Activated CD4-positive, alpha-beta T cell treated with anti-CD3 and anti-CD28 coated beads, Interleukin-2, amount 10 ng/mL, durations not matched to agents 24 days and 14 days (primary cell): ENCODE measurements at regions of chr14 and their contacts with region 1.

Region 1: GRCh38 chr14:70027785-70028428 is 148.7 kb downstream of the SMOC1 start:
- DNase-seq: peak; percentile 91
- H3K4me3 Mint-ChIP-seq: no peak overlapping the region
- H3K27ac Mint-ChIP-seq: no peak overlapping the region
- H3K4me1 Mint-ChIP-seq: no peaks in the 10 kb centered on the region
- H3K27me3 Mint-ChIP-seq: no peaks in the 10 kb centered on the region

Region 2: DNA sequence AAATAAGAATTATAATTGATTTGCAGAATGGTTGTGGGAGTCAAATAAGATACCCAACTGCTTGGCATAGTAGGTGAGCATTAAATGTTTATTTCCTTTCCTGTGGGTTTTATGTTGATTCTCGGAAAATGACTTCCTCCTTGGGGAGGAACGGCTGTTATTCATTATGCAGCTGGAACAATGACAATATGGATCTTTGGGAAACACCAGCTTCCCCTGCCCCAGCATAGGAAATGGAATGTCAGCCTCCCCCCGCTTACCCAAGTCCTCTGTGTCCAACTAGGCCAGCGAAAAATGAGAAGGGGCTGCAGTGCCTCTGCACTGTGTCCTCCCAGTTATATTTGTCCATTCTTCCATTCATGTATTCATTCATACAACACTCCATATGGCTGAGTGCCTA is 441.5 kb before region 1 on chr14:
- intact Hi-C with region 1: loop called (anchors 5 kb)
- DNase-seq: no peak
- H3K4me3 Mint-ChIP-seq: no peak overlapping the region
- H3K27ac Mint-ChIP-seq: no peak overlapping the region
- H3K4me1 Mint-ChIP-seq: peaks cover 8% of the 10 kb centered on the region
- H3K27me3 Mint-ChIP-seq: peaks cover 7% of the 10 kb centered on the region

Region 3: DNA sequence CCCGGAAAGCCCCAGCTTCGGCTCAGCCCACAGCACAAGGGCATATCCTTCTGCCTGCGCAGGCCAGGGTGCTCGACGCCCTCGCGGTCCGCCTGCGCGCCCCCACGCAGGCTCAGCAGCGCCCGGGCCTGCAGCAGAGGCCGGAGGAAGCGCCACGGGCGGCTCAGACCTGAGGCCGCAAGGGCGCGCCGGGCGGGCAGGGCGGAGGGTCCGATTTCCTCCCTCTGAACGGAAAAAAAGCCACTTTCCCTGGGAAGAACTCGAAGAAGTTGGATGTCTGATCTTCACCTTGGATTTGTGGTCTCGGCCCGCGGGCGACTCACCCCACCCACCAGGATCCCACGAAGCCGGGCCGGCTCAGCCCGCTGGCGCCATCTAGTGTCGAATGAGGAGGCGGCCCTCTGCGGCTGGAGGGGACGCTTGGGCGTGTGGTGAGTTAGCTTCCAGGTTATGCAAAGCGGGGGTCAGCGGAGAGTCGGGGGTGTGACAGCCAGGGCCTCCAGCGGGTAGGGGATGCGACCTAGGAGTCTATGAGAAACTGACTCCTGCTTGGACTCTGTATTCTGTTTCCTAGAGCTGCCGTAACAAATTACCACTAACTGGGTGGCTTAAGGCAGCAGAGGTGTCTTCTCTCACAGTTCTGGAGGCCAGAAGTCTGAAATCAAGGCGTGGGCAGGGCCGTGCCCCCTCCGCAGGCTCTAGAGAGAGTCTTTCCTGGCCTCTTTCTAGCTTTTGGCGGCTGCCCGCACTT is 301.0 kb before region 1 on chr14:
- intact Hi-C with region 1: loop called (anchors 2 kb)
- DNase-seq: peak; percentile 96
- H3K4me3 Mint-ChIP-seq: peak overlapping the region; percentile 79
- H3K27ac Mint-ChIP-seq: peak overlapping the region; percentile 79
- H3K4me1 Mint-ChIP-seq: peaks cover 33% of the 10 kb centered on the region
- H3K27me3 Mint-ChIP-seq: peaks cover 7% of the 10 kb centered on the region

Region 4: DNA sequence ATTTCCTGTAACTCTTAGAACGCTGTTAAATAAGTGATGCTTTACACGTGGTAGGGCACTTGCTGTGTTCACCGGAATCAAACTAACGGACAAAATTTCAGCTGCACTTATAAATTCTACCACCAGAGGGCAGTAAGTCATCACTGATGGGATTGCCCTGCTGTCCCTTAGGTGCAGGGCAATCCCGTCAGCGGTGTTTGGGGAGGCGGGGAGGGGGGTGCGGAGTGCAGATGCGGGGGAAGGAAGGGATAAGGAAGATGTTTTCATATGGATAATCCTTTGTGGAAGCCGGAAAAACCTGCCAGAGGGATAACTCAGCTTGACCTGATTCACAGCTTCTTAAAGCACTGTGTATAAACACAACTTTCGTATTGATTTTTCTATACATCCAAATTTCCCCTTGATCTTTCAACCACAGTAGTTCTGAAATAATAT is 209.1 kb before region 1 on chr14:
- intact Hi-C with region 1: loop called (anchors 1 kb)
- DNase-seq: peak; percentile 92
- H3K4me3 Mint-ChIP-seq: no peak overlapping the region
- H3K27ac Mint-ChIP-seq: no peak overlapping the region
- H3K4me1 Mint-ChIP-seq: peaks cover 4% of the 10 kb centered on the region
- H3K27me3 Mint-ChIP-seq: peaks cover 10% of the 10 kb centered on the region

Region 5: DNA sequence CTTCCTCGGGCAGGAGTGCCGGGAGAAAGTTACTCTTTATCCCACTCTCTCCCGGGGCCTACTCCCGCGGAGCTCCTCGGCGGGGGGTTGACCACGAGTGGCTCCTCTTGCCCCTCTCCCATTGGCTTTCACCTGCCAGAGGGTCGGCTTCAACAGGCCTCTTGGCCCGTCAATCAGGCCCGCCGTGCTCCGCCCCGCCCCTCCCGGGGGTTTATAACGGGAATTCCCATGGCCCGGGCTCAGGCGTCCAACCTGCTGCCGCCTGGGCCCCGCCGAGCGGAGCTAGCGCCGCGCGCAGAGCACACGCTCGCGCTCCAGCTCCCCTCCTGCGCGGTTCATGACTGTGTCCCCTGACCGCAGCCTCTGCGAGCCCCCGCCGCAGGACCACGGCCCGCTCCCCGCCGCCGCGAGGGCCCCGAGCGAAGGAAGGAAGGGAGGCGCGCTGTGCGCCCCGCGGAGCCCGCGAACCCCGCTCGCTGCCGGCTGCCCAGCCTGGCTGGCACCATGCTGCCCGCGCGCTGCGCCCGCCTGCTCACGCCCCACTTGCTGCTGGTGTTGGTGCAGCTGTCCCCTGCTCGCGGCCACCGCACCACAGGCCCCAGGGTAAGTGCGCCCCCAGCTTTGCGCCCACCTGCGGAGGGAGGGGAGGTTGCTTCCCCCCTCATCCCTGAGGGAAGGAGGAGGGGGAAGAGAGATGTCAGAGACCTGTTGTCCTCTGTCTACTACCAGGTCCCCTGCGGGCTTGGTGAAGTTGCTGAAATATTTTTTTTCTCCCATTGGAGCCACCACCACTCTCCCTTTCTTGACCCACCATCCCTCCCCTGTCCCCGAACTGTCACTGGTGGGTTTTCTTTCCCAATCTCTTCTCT is 148.5 kb before region 1 on chr14 and contains the start of gene SMOC1:
- intact Hi-C with region 1: loop called (anchors 5 kb)
- DNase-seq: no peak
- H3K4me3 Mint-ChIP-seq: no peak within 1 kb of the TSS
- H3K27ac Mint-ChIP-seq: no peak within 1 kb of the TSS
- H3K4me1 Mint-ChIP-seq: no peaks in the 10 kb centered on the region
- H3K27me3 Mint-ChIP-seq: peaks cover 55% of the 10 kb centered on the region
- total RNA-seq, gene SMOC1: not detected in 2 replicates